ENCODE measurements at regions of chr4 and their contacts with region 1.

Region 1: DNA sequence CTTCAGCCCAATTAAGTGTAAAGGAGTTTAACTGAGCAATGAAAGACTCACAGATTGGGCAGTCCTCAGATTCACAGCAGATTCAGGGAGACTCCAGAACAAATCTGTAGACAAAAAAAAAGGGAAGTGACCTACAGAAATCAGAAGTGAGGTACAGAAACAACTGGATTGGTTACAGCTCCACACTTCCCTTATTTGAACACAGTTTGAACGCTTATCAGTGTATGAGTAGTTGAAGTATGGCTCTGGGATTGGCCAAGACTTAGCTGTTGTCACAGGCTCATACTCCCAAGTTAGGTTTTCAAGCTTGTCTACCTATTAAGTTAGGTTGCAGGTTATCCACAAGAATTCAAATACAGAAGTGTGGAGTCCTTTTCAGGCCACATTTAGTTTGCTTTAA is 112.4 kb upstream of the ELOVL6 start:
- DNase-seq: no peak
- ATAC-seq: no peak
- H3K4me3 ChIP-seq: no peak overlapping the region
- H3K27ac ChIP-seq: no peak overlapping the region
- H3K4me1 ChIP-seq: no peaks in the 10 kb centered on the region
- H3K27me3 ChIP-seq: no peaks in the 10 kb centered on the region

Region 2: GRCh38 chr4:110005461-110006056 is 305.2 kb before region 1 on chr4:
- intact Hi-C with region 1: loop called in 1 of 4 experiments (anchors 10 kb)
- DNase-seq: no peak
- ATAC-seq: no peak
- H3K4me3 ChIP-seq: no peak overlapping the region
- H3K27ac ChIP-seq: no peak overlapping the region
- H3K4me1 ChIP-seq: no peaks in the 10 kb centered on the region
- H3K27me3 ChIP-seq: no peaks in the 10 kb centered on the region

Region 3: DNA sequence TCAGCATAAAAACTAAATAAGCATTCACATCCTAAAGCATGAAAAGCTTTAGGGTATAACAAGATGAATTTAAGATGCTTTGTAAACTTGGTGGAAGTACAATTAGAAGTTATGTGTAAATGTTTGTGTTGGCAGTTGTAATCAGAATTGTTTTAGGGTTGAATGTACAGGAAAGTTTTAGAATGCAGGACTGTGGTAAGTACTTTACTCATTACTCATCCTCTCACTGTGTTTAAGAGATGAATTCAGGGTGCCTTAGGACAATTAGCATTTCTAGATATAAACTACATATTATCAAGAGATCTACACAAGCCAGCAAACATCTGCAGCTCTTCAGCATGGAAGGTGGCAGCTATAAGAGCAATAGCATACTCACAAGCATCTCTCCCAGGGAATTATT is 34.9 kb before region 1 on chr4:
- intact Hi-C with region 1: no loop called
- DNase-seq: no peak
- ATAC-seq: no peak
- H3K4me3 ChIP-seq: no peak overlapping the region
- H3K27ac ChIP-seq: no peak overlapping the region
- H3K4me1 ChIP-seq: no peaks in the 10 kb centered on the region
- H3K27me3 ChIP-seq: no peaks in the 10 kb centered on the region

Region 4: DNA sequence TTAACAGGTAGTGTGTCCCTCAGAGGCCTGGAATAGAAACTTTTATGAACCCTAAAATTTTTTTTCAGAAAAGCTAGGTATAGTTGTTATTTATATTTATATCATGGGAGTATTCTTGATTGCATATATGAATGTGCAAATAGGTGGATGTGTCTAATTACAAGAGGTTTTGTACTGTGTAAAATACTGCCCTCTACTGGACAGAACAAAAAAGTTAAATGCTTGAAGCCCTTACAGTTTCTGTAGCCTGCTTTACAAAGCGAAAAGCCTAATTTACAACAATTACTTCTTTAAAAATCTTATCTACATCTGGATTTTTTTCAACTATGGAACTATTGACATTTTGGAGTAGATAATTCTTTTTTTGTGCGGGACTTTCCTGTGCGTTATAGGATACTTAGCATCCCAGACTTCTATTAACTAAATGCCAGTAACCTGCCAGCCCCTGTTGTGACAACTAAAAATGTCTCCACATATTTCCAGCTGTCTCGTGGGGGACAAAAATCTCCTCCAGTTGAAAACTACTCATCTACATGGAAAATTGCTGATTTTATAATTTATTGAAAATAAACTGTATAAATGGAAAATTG is 200.3 kb after region 1 on chr4:
- intact Hi-C with region 1: loop called (anchors 5 to 10 kb)
- DNase-seq: no peak
- ATAC-seq: peak; percentile 51 to 59
- H3K4me3 ChIP-seq: no peak overlapping the region
- H3K27ac ChIP-seq: no peak overlapping the region
- H3K4me1 ChIP-seq: no peaks in the 10 kb centered on the region
- H3K27me3 ChIP-seq: no peaks in the 10 kb centered on the region

Region 5: DNA sequence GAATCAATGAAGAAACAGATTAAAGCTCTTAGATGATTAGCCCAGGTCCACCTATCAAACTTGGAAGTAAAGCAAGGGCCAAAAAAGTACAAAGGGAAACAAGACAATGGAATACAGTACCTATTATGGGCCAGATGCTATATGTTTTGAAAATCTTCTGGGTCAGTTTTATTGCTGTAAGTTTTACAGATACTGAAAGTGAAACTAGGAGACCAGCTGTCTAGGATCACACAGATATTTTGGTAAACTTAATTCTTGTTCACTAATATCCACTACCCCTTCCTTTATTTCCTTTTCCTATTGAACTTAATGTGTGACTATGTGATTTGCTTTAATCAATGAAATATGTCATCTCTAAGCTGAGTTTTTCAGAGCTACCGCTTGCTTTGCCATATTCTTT is 817.5 kb after region 1 on chr4:
- intact Hi-C with region 1: no loop called
- DNase-seq: no peak
- ATAC-seq: no peak
- H3K4me3 ChIP-seq: no peak overlapping the region
- H3K27ac ChIP-seq: no peak overlapping the region
- H3K4me1 ChIP-seq: no peaks in the 10 kb centered on the region
- H3K27me3 ChIP-seq: no peaks in the 10 kb centered on the region

Region 6: GRCh38 chr4:112038861-112039260 is 1728.1 kb after region 1 on chr4:
- intact Hi-C with region 1: loop called in 1 of 4 experiments (anchors 10 kb)
- DNase-seq: no peak
- ATAC-seq: no peak
- H3K4me3 ChIP-seq: no peak overlapping the region
- H3K27ac ChIP-seq: no peak overlapping the region
- H3K4me1 ChIP-seq: no peaks in the 10 kb centered on the region
- H3K27me3 ChIP-seq: no peaks in the 10 kb centered on the region